GM13976 (cell line): ENCODE measurements at regions of chr7 and their contacts with region 1.

Region 1: GRCh38 chr7:90629297-90629918 is 33.3 kb downstream of the CDK14 start:
- DNase-seq: peak; percentile 47
- CTCF ChIP-seq: peak; percentile 52

Region 2: GRCh38 chr7:90455163-90456030 is 174.0 kb before region 1 on chr7:
- in situ Hi-C with region 1: loop called (anchors 25 kb)
- DNase-seq: peak; percentile 59
- CTCF ChIP-seq: peak; percentile 46